ENCODE measurements at regions of chr11 and their contacts with region 1.

Region 1: GRCh38 chr11:33742249-33742851 is 6.1 kb upstream of the CD59 start:
- DNase-seq: no peak
- H3K4me3 ChIP-seq: no peak overlapping the region
- H3K4me3 Mint-ChIP-seq: no peak overlapping the region
- H3K27ac Mint-ChIP-seq: no peak overlapping the region
- H3K4me1 ChIP-seq: peaks cover under 1% of the 10 kb centered on the region
- H3K4me1 Mint-ChIP-seq: peaks cover 12% of the 10 kb centered on the region
- H3K27me3 ChIP-seq: no peaks in the 10 kb centered on the region
- H3K27me3 Mint-ChIP-seq: no peaks in the 10 kb centered on the region
- CTCF ChIP-seq: peak; percentile 16 to 41

Region 2: GRCh38 chr11:33542921-33543320 is 199.4 kb before region 1 on chr11:
- CTCF ChIA-PET with region 1: interaction called, 6 read pairs
- POLR2A ChIA-PET with region 1: no interaction called
- intact Hi-C with region 1: loop called (anchors 2 kb)
- DNase-seq: peak; percentile 61
- H3K4me3 ChIP-seq: no peak overlapping the region
- H3K4me3 Mint-ChIP-seq: no peak overlapping the region
- H3K27ac Mint-ChIP-seq: no peak overlapping the region
- H3K4me1 ChIP-seq: no peaks in the 10 kb centered on the region
- H3K4me1 Mint-ChIP-seq: peaks cover 4% of the 10 kb centered on the region
- H3K27me3 ChIP-seq: no peaks in the 10 kb centered on the region
- H3K27me3 Mint-ChIP-seq: peaks cover 25% of the 10 kb centered on the region
- CTCF ChIP-seq: peak; percentile 44 to 81

Region 3: GRCh38 chr11:33716236-33716635 is 26.1 kb before region 1 on chr11:
- CTCF ChIA-PET with region 1: interaction called, 37 read pairs
- POLR2A ChIA-PET with region 1: no interaction called
- intact Hi-C with region 1: no loop called
- DNase-seq: no peak
- H3K4me3 ChIP-seq: no peak overlapping the region
- H3K4me3 Mint-ChIP-seq: no peak overlapping the region
- H3K27ac Mint-ChIP-seq: no peak overlapping the region
- H3K4me1 ChIP-seq: no peaks in the 10 kb centered on the region
- H3K4me1 Mint-ChIP-seq: peaks cover 6% of the 10 kb centered on the region
- H3K27me3 ChIP-seq: no peaks in the 10 kb centered on the region
- H3K27me3 Mint-ChIP-seq: no peaks in the 10 kb centered on the region
- CTCF ChIP-seq: peak in 1 of 2 experiments; percentile 38